Left colon (tissue), 2 donors: ENCODE measurements at regions of chr5 and their contacts with region 1.

Region 1: GRCh38 chr5:139787568-139788293 is 7.9 kb upstream of the PSD2 start:
- DNase-seq: peak; percentile 52 to 87
- ATAC-seq: peak; percentile 93

Region 2: DNA sequence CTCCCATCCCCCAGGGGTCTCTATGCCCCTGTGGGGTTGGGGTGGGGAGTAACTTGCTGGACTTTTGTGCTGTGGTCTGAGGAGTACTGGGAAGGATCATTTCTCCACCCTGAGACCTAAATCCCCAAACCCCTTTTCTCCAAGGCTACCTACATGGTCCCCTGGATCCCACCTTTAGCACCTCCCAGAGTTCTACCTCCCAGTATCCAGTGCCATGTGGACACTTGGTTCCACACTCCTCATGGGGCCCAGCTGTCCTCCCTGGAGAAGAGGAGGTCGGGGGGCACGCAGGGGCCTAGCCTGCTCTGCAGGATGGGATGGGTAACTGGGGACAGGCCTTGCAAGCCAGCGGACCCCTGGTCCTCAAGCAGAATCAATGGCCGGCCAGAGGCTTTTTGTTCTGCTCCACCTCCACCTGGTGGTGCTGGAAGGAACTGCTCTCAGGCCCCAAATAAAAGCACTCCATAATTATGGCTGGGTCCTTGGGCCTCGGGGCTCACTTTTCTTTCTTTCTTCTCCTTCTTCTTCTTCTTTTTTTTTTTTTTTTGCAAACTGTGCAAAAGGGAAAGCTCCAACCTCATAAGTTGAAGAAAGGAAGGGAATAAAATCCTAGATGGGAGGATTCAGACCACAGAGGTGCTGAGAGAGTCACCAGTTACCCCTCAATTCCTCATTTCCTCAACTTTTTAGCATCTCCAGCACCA is 76.3 kb after region 1 on chr5:
- intact Hi-C with region 1: loop called in 1 of 2 experiments (anchors 2 kb)
- DNase-seq: peak in 1 of 2 donors; percentile 73
- ATAC-seq: peak; percentile 77

Region 3: DNA sequence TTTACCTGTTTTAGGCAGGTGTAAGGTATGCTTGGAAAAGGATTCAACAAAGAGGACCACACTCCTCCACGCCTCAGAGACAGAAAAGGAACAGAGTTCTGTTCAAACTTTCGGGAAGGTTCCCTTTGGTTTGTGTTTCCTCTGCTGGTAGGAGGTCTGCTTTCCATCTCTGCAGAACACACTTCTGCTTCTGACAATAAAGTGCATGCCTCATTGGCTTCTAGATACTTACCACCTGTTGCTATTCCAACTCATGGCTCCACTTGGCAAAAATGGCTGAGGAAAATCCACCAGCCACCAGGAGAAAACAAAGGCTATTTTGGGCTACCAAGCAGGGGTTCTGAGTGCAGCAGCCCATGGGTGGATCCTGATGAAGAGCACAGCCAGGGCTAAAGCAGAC is 142.7 kb after region 1 on chr5:
- intact Hi-C with region 1: no loop called
- DNase-seq: no peak
- ATAC-seq: no peak

Region 4: GRCh38 chr5:139968547-139969261 is 181.0 kb after region 1 on chr5:
- intact Hi-C with region 1: loop called (anchors 2 to 5 kb)
- DNase-seq: peak; percentile 71 to 92
- ATAC-seq: peak; percentile 100